Panc1 (cell line): ENCODE measurements at regions of chr15 and their contacts with region 1.

Region 1: DNA sequence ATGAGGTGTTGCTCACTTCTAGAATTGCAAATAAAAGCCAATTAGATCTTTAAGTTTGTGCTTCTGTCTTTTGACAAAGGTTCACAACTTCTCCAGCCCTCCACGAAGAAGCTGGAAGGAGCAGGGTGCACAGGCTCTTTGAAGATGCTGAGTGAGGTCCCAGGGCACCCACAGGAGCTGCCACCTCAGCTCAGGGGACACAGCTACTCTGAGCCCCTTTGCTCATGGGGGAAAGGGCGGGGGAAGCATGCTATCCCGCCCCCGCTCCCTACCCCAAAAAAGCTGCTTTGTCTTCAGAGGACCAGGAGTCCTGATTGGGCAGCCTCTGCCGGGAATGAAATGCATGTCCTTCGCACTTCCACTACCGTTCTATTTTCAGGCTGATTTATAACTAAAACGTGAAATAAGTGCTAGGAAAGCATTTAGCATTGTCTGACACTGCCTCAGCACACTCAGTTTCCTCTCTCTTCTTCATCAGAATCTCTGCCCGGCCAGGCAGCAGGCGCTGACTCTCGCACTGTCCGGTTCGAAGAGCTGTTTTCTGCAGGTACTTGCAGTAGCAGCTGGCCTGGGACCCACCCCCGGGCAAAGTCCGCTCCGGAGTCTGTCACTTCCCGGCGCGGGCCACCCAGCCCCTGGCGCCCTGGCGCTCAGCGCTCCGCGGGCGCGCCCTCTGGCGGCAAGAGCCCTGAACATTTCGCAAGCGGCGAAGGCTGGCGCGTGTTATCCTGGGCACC is 45.5 kb upstream of the KLHL25 start:
- DNase-seq: no peak
- ATAC-seq: peak; percentile 96
- H3K4me3 ChIP-seq: peak overlapping the region; percentile 21 to 57
- H3K27ac ChIP-seq: no peak overlapping the region
- H3K4me1 ChIP-seq: peaks cover 8% of the 10 kb centered on the region
- H3K27me3 ChIP-seq: 0 out of 2 replicates have a peak, but pooled peaks cover 2% of the 10 kb centered on the region
- CTCF ChIP-seq: peak; percentile 98

Region 2: GRCh38 chr15:85443593-85444087 is 396.6 kb before region 1 on chr15:
- CTCF ChIA-PET with region 1: no interaction called
- POLR2A ChIA-PET with region 1: interaction called, 15 read pairs
- in situ Hi-C with region 1: no loop called
- intact Hi-C with region 1: no loop called
- DNase-seq: peak; percentile 50
- ATAC-seq: peak; percentile 86
- H3K4me3 ChIP-seq: no peak overlapping the region
- H3K27ac ChIP-seq: peak overlapping the region; percentile 62
- H3K4me1 ChIP-seq: peaks cover 40% of the 10 kb centered on the region
- H3K27me3 ChIP-seq: no peaks in the 10 kb centered on the region
- CTCF ChIP-seq: 0 out of 2 replicates have a peak, but pooled peaks have one; percentile 11

Region 3: GRCh38 chr15:85800467-85801123 is 39.6 kb before region 1 on chr15:
- CTCF ChIA-PET with region 1: interaction called, 6 read pairs
- POLR2A ChIA-PET with region 1: no interaction called
- in situ Hi-C with region 1: no loop called
- intact Hi-C with region 1: loop called (anchors 1 kb)
- DNase-seq: peak; percentile 67
- ATAC-seq: peak; percentile 97
- H3K4me3 ChIP-seq: no peak overlapping the region
- H3K27ac ChIP-seq: no peak overlapping the region
- H3K4me1 ChIP-seq: peaks cover 14% of the 10 kb centered on the region
- H3K27me3 ChIP-seq: no peaks in the 10 kb centered on the region
- CTCF ChIP-seq: peak; percentile 52; the same call in 1 of the 2 replicates